ENCODE measurements at regions of chr1 and their contacts with region 1.

Region 1: DNA sequence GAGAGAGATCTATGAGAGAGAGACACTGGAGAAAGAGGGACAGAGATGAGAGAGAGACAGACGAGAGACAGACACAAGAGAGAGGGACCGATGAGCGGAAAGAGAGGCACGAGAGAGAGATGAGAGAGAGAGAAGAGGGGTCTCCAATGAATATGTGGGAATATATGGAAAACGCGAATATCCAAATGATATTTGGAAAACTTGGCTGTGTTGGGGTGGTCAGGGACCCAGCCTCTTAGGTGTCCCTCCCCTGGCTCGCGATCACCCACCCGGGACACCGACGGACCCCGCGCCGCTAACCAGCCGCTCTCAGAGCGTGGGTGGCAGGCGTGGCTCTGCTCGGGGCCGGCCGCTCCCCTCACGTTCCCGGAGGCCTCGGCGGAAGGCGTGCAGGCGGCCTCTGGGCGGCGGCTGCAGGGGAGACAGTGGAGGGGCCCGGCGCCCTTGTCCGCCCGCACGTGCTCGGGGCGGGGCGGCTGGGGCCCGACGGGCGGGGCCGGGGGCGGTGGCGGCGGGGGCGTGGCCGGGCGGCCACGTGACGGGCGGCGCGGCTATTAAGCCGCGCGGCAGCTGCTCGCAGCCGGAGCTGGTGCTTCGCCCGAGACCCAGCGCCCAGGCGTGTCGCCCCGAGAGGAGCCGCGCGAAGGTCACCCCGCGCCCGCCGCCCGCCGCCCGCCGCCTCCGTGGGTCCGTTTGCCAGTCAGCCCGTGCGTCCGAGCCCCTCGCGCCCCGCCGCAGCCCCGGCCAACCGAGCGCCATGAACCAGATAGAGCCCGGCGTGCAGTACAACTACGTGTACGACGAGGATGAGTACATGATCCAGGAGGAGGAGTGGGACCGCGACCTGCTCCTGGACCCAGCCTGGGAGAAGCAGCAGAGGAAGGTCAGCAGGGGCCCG is at the start of gene ACTN2:
- DNase-seq: peak in 34 of 35 experiments; percentile 0 to 61 (median 24)
- ATAC-seq: peak; percentile 79 to 89 (median 84)
- H3K4me3 ChIP-seq: peak within 1 kb of the TSS; percentile 26 to 67
- H3K4me3 Mint-ChIP-seq: peak within 1 kb of the TSS; percentile 57 to 78 (median 63)
- H3K27ac ChIP-seq: no peak within 1 kb of the TSS
- H3K27ac Mint-ChIP-seq: peak within 1 kb of the TSS in 1 of 2 donors; percentile 61
- H3K4me1 ChIP-seq: peaks cover 12 to 15% of the 10 kb centered on the region in 2 experiments
- H3K4me1 Mint-ChIP-seq: peaks cover 12 to 26% (median 26%) of the 10 kb centered on the region in 3 donors
- H3K27me3 ChIP-seq: peaks cover 18 to 32% of the 10 kb centered on the region in 2 experiments
- H3K27me3 Mint-ChIP-seq: peaks cover 44 to 46% of the 10 kb centered on the region in 2 donors
- total RNA-seq, gene ACTN2: 0.26 TPM in 1 of 5 donors, not detected in the others

Region 2: GRCh38 chr1:236581528-236581927 is 104.6 kb before region 1 on chr1:
- CTCF ChIA-PET with region 1: no interaction called
- POLR2A ChIA-PET with region 1: no interaction called
- DNase-seq: no peak
- ATAC-seq: no peak
- H3K4me3 ChIP-seq: no peak overlapping the region
- H3K4me3 Mint-ChIP-seq: no peak overlapping the region
- H3K27ac ChIP-seq: no peak overlapping the region
- H3K27ac Mint-ChIP-seq: no peak overlapping the region
- H3K4me1 ChIP-seq: no peaks in the 10 kb centered on the region
- H3K4me1 Mint-ChIP-seq: no peaks in the 10 kb centered on the region
- H3K27me3 ChIP-seq: no peaks in the 10 kb centered on the region
- H3K27me3 Mint-ChIP-seq: no peaks in the 10 kb centered on the region

Region 3: DNA sequence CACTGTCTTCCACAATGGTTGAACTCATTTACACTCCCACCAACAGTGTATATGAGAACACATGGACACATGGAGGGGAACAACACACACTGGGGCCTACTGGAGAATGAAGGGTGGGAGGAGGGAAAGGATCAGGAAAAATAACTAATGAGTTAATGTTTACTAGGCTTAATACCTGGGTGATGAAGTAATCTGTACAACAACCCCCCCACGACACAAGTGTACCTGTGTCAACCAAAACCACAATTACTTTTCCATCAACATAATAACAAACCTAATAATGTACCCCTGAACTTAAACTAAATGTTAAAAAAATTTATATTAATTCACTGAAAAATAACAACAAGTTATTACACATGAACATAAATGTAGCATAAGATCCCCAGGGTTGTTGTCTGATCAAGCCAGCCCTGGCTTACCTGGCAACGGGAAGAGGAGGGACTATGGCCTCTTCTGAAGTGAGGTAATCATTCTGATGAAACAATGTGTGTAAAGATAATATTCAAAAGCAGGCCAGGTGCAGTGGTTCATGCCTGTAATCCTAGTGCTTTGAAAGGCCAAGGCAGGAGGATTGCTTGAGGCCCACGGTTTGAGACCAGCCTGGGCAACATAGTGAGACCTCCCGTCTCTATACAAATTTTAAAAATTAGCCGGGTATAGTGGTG is 41.0 kb before region 1 on chr1:
- CTCF ChIA-PET with region 1: no interaction called
- POLR2A ChIA-PET with region 1: interaction called in 1 of 2 experiments, 12 read pairs
- DNase-seq: no peak
- ATAC-seq: no peak
- H3K4me3 ChIP-seq: no peak overlapping the region
- H3K4me3 Mint-ChIP-seq: no peak overlapping the region
- H3K27ac ChIP-seq: no peak overlapping the region
- H3K27ac Mint-ChIP-seq: no peak overlapping the region
- H3K4me1 ChIP-seq: no peaks in the 10 kb centered on the region
- H3K4me1 Mint-ChIP-seq: no peaks in the 10 kb centered on the region
- H3K27me3 ChIP-seq: no peaks in the 10 kb centered on the region
- H3K27me3 Mint-ChIP-seq: peaks cover 0 to 2% of the 10 kb centered on the region in 2 donors

Measured in T-cell (primary cell).